Activated T-helper 2 cell treated with anti-CD3 and anti-CD28 coated beads, Interferon-gamma antibody, Interleukin-2, Interleukin-4, amounts not matched to agents 10 μg/mL and 5 μg/mL and 100 μg/mL, durations not matched to agents 14 hours and 24 hours and 36 hours (primary cell): ENCODE measurements at regions of chr18 and their contacts with region 1.

Region 1: GRCh38 chr18:23619388-23619881 is 33.1 kb upstream of the NPC1 start:
- DNase-seq: no peak
- H3K4me3 Mint-ChIP-seq: no peak overlapping the region
- H3K27ac Mint-ChIP-seq: no peak overlapping the region
- H3K4me1 Mint-ChIP-seq: no peaks in the 10 kb centered on the region
- H3K27me3 Mint-ChIP-seq: peaks cover 42% of the 10 kb centered on the region

Region 2: DNA sequence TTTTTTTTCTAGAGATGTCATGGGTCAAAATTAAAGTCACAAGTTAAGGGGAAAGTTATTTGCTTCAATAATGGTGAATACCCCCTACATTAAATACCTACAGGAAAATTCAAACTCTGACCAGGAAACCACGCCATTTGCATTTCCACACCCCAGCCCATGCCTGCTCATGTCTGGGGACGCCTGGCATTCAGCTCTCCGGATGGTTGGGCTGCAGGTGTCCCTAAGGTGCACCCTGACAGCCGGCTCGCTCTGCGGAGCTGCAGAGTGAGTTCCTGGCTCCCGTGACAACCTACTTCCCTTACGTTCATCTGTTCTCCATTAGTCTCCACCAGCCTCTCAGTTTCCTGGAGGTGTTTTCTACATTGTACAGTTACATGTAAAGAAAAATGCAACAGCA is 289.0 kb before region 1 on chr18:
- intact Hi-C with region 1: no loop called
- DNase-seq: no peak
- H3K4me3 Mint-ChIP-seq: no peak overlapping the region
- H3K27ac Mint-ChIP-seq: no peak overlapping the region
- H3K4me1 Mint-ChIP-seq: no peaks in the 10 kb centered on the region
- H3K27me3 Mint-ChIP-seq: no peaks in the 10 kb centered on the region

Region 3: DNA sequence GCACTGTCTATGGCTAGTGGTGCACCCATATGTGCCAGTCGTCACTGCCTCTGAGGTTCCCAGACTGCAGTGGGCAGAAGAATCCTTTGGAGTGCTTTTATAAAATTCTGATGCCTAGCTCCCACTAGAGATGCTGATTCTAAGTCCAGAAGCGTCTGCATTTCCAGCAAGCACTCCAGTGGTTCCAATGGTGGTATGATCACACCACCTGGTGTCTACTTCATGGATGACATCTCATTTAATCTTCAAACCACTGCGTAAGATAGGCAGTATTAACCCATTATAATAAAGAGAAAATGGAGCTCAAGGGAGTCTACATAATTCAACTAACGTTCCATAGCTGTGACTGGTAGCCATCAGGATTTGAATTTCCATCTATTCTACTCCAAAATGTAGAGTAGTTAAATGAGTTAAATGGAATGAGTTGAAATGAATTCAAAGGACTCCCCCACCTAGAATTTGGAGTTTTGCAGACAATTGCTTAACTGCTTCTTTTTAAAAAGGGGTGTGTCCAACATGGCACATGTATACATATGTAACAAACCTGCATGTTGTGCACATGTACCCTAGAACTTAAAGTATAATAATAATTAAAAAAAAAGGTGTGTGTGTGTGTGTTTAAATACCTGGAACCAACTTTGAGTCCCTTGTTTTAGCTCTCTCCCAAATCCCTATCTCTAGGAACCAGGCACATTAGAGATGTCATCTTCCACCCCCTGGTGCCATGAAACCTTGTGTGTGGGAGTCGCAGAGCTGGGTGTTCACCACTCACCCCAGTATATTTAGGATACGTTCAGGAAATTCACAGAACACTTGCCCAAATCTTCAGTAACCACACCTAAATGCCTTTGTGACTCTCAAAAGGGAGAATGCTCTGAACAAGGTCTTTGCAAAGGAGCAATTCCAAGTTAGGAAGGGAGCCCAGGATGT is 83.9 kb after region 1 on chr18:
- intact Hi-C with region 1: loop called (anchors 1 kb)
- DNase-seq: no peak
- H3K4me3 Mint-ChIP-seq: no peak overlapping the region
- H3K27ac Mint-ChIP-seq: no peak overlapping the region
- H3K4me1 Mint-ChIP-seq: no peaks in the 10 kb centered on the region
- H3K27me3 Mint-ChIP-seq: peaks cover 54% of the 10 kb centered on the region

Region 4: DNA sequence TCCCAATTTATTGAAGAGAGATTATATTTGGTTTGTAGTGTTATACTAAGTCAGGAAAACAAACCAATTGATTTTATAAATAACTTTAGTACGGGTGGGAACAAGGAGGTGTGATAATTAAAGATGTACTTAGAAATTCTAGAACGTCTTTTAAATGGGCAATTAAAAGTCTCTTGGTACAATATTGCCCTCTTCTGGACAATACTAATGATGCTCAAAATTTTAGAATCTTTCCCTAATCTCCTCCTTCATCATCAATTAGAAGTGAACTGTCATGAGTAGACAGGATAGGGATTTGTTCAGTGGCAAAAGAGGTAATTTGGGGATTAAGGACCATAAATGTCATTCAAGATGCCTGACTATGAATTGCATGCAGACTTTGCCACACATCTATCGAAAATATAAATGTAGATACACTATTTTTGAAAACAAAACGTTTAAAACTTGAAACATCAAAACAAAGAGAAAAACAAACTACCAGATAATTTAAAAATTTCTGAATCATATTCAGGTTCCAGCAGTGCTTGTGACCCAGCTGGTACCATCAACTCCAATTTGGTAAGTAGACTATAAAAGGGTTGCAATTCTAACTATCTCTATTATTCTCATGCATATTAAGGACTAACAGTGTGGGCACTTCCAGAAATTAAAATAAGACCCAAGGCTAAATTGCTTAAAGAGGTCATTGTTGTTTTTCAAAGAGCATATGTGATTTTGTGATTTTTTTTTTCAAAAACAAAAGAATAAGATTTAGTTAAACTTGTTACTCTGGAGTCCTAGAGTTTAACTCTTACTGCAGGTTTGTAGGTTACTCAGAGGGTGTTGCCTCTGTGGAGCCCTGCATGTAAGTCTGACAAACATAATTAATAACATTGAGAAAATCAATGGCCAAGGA is 193.4 kb after region 1 on chr18:
- intact Hi-C with region 1: loop called (anchors 2 kb)
- DNase-seq: no peak
- H3K4me3 Mint-ChIP-seq: no peak overlapping the region
- H3K27ac Mint-ChIP-seq: no peak overlapping the region
- H3K4me1 Mint-ChIP-seq: peaks cover 12% of the 10 kb centered on the region
- H3K27me3 Mint-ChIP-seq: peaks cover 17% of the 10 kb centered on the region

Region 5: DNA sequence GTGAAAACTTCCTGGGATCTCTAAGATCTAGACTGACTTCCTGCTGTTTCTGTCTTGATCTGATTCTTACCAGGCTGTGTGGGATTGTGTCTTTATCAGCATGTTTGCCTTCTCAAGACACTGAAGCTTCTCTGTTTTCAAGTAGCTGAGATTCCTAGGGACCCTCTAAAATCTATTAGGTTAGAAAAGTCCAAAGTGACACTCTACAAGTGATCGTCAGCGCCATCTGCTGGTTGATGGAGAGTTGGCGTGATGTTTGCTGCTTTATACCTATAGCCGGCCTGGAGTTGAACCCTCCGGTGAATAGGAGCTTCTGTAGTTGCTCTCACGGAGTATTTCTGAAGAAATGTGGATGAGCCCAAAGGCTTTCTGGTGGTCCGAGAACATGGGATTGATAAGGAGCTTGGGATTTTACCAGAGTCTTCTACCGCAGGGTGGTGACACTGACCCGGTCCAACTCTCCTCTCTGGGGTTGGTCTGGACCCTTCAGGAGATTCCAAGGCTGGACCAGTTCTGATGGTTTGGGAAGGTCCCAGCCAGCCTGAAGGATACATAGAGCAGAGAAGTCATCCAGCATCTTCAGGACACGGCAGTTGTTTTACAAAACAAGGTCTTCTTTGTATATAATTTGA is 299.1 kb after region 1 on chr18:
- intact Hi-C with region 1: loop called (anchors 2 kb)
- DNase-seq: peak; percentile 58
- H3K4me3 Mint-ChIP-seq: no peak overlapping the region
- H3K27ac Mint-ChIP-seq: no peak overlapping the region
- H3K4me1 Mint-ChIP-seq: peaks cover 19% of the 10 kb centered on the region
- H3K27me3 Mint-ChIP-seq: peaks cover 28% of the 10 kb centered on the region